GM18951 (cell line): ENCODE measurements at regions of chr5 and their contacts with region 1.

Region 1: GRCh38 chr5:134041570-134042411 is 37.0 kb upstream of the VDAC1 start:
- POLR2A ChIP-seq: no peak

Region 2: DNA sequence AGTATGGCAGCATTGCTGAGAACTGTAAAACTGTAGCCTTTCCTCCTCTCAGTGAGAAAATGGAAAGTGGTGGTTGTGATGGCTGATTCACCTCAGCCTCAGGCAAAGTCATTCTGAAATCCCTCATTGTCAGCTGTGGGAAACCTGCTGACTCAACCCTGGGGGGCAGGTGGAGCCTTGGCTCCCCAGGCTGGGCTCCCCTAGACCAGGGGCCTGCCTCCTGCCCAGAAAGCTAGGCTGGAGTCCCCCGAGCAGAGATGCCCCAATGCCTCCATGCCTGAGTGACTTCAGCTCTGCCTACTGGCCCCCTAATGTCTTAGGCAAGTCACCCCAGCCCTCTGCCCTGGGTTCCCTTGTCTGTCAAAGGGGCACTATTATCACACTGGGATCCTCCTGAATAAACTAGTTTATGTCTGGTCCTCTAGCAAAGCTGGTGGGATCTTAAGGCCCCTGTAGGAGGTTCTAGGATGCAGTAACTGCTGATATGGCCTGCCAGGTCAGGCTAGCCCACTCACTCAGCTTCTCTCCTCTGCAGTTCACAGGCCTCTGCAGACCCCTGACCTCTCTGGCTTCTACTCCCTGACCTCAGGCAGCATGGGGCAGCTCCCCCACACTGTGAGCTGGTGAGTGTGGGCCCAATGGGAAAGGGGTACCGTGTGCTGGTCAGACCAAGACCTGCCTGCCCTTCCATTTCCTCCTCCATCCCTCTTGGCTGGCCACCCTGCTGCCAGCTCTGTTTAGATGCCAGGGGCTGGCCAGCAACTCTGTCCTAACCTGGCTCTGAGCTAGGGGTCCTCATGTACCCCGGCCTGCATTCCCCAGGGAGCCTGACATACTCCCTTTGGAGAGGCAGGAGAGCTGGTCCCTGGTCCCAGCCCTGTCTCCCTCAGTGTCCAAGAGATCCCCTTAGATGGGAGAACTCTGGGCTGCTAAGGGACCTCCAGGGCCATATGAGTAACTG is 96.9 kb after region 1 on chr5:
- in situ Hi-C with region 1: loop called (anchors 5 kb)
- POLR2A ChIP-seq: no peak